ENCODE measurements at regions of chr15 and their contacts with region 1.

Region 1: DNA sequence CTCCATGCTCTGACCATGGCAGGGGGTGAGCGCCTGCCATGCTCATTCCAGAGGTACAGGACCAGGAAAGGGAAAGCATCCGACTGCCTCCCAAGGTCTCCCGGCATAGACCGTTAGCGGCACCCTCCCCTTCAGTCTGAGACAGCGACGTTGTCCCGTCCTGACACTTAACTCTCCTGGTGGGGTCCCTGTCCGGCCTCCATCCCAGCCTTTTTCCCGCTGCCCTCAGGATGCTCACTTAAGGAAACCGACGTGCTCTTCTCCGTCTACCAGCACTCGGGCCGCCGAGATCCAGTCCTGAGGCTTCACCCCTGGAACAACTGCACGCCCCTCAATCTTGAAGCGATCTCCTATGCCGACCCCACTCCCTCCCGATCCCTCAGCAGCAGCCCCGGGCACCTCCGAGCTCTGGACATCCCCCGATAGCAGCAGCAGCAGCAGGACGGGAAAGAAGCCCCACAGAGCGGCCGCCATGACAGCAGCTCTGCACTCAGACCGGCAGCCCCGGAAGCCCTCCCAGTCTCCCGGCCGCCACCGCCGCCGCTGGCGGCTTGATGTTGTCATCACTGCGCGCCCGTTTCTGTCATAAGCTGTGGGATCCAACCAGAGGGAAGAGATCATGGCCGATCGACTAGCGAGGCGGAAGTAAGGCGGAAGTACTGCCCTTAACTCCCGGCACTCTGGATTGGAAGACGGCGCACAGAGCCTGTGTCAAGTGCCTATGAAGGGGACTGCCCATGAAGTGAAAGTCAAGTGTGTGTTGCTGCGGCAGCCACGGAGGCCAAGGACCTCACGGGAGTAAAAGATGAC is at the starts of genes EMC7 and PGBD4:
- DNase-seq: peak; percentile 99
- ATAC-seq: peak; percentile 100
- H3K4me3 ChIP-seq: peak within 1 kb of the TSS; percentile 72 to 95 (median 86)
- H3K27ac ChIP-seq: peak within 1 kb of the TSS; percentile 4 to 95 (median 88)
- H3K4me1 ChIP-seq: peaks cover 6 to 34% (median 22%) of the 10 kb centered on the region in 12 donors
- H3K27me3 ChIP-seq: no peaks in the 10 kb centered on the region
- CTCF ChIP-seq: no peak
- POLR2A ChIP-seq: peak in 1 of 2 donors; percentile 77
- total RNA-seq, gene EMC7: 28.9 to 95.2 (median 59.1) TPM
- total RNA-seq, gene PGBD4: 0.95 to 2.1 (median 1.7) TPM

Region 2: DNA sequence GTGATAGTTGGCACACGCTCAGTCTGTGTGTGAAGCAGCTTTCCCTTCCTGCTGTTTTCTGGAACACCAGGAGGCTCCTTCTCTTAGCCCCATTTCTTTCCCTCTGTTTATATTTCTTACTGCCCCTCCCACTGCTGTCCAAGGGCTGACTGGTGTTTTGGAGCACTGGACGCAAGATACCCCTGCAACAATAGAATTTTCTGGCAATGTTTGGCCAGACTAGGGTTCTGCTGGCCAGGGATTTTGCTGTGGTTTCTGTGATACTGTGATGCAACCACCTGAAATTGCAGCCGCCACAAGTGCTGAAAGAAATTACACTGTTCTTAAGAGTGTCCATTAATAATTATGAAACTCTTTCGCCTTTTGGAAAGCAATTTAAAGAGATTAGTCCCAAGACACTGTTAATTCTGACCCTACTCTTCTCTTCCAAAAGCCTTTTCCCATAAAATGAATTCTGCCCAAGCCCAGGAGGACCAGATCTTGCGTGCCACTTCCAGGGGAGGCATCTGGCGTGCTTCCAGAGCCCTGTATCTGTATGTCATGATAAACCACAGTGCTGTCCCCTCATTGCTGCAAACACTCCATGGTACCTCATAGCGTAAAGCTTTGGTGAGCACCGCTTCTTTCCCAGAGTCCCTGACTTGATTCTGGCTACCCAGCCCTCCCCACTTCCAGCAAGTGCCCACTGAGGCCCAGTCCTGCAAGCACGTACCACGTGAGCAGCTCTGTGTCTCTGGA is 292.7 kb before region 1 on chr15:
- intact Hi-C with region 1: no loop called
- DNase-seq: no peak
- ATAC-seq: no peak
- H3K4me3 ChIP-seq: no peak overlapping the region
- H3K27ac ChIP-seq: no peak overlapping the region
- H3K4me1 ChIP-seq: no peaks in the 10 kb centered on the region
- H3K27me3 ChIP-seq: no peaks in the 10 kb centered on the region
- CTCF ChIP-seq: no peak
- POLR2A ChIP-seq: no peak

Region 3: GRCh38 chr15:34038023-34038870 is 63.3 kb before region 1 on chr15:
- intact Hi-C with region 1: loop called in 1 of 10 experiments (anchors 10 kb)
- DNase-seq: peak; percentile 80 to 91 (median 84)
- ATAC-seq: peak; percentile 79 to 96 (median 94)
- H3K4me3 ChIP-seq: peak overlapping the region; percentile 48 to 98 (median 80)
- H3K27ac ChIP-seq: peak overlapping the region; percentile 84 to 98 (median 92)
- H3K4me1 ChIP-seq: peaks cover 0 to 27% (median 13%) of the 10 kb centered on the region in 12 donors
- H3K27me3 ChIP-seq: no peaks in the 10 kb centered on the region
- CTCF ChIP-seq: no peak
- POLR2A ChIP-seq: no peak

Region 4: GRCh38 chr15:34055853-34056595 is 45.5 kb before region 1 on chr15:
- intact Hi-C with region 1: no loop called
- DNase-seq: no peak
- ATAC-seq: peak in 3 of 4 donors; percentile 64 to 83 (median 75)
- H3K4me3 ChIP-seq: no peak overlapping the region
- H3K27ac ChIP-seq: peak overlapping the region in 5 of 12 donors; percentile 42 to 64 (median 51)
- H3K4me1 ChIP-seq: peaks cover 0 to 7% (median 0%) of the 10 kb centered on the region in 12 donors
- H3K27me3 ChIP-seq: no peaks in the 10 kb centered on the region
- CTCF ChIP-seq: no peak
- POLR2A ChIP-seq: no peak

Region 5: GRCh38 chr15:34223904-34224596 is 122.5 kb after region 1 on chr15:
- intact Hi-C with region 1: loop called in 8 of 10 experiments (anchors 1 to 5 kb)
- DNase-seq: no peak
- ATAC-seq: peak in 3 of 4 donors; percentile 28 to 38 (median 29)
- H3K4me3 ChIP-seq: peak overlapping the region; percentile 71 to 97 (median 84)
- H3K27ac ChIP-seq: peak overlapping the region; percentile 43 to 99 (median 91)
- H3K4me1 ChIP-seq: peaks cover 0 to 23% (median 16%) of the 10 kb centered on the region in 12 donors
- H3K27me3 ChIP-seq: no peaks in the 10 kb centered on the region
- CTCF ChIP-seq: no peak
- POLR2A ChIP-seq: no peak

Region 6: DNA sequence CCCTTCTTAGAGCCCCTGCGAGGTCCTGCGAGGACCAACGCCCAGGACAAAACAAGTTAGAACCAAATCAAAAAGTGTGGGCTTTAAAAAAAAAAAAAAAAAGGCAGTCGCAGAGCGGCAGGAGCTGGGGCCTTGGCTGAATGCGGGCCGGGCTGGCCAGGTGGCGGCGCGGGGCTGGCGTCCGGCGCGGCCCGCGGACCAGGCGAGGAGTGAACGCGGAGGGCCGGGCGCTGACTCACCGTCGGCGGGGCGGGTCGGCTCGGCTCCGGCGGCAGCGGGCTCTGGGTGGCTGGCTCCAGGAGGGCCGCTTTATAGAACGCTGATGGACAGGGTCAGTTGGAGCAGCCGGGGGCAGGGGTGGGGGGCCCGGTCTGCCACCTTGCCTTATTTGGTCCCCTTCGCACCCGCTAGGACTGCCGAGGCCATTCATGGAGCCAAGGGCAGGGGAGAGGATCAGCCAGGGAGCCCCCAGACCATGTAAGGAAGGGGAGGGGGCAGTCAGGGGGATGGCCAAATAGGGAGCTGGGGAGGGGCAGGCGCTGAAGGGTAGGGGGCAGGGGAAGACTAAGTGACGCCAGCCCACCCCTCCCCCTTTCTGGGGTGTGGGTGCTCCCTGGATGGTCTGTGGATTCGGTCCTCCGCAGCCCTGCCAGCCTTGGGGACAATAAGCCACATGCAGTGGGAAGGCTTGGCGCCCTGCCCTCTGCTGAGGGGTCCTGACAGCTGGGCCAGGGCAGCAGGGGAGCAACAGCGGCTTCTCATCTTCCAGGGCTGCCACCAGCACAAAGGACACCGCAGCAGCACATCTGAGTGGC is 693.9 kb after region 1 on chr15 and contains the start of gene ACTC1:
- intact Hi-C with region 1: no loop called
- DNase-seq: peak; percentile 76 to 94 (median 83)
- ATAC-seq: peak; percentile 29 to 61 (median 58)
- H3K4me3 ChIP-seq: peak within 1 kb of the TSS; percentile 43 to 84 (median 61)
- H3K27ac ChIP-seq: peak within 1 kb of the TSS; percentile 69 to 96 (median 93)
- H3K4me1 ChIP-seq: peaks cover 0 to 43% (median 17%) of the 10 kb centered on the region in 12 donors
- H3K27me3 ChIP-seq: peaks cover 0 to 44% (median 5%) of the 10 kb centered on the region in 9 donors
- CTCF ChIP-seq: peak in 1 of 12 donors; percentile 12
- POLR2A ChIP-seq: peak in 1 of 2 donors; percentile 86
- total RNA-seq, gene ACTC1: 3,808 to 17,901 (median 12,860) TPM

Measured in heart left ventricle (tissue), 16 donors.